ENCODE measurements at regions of chr11 and their contacts with region 1.

Region 1: DNA sequence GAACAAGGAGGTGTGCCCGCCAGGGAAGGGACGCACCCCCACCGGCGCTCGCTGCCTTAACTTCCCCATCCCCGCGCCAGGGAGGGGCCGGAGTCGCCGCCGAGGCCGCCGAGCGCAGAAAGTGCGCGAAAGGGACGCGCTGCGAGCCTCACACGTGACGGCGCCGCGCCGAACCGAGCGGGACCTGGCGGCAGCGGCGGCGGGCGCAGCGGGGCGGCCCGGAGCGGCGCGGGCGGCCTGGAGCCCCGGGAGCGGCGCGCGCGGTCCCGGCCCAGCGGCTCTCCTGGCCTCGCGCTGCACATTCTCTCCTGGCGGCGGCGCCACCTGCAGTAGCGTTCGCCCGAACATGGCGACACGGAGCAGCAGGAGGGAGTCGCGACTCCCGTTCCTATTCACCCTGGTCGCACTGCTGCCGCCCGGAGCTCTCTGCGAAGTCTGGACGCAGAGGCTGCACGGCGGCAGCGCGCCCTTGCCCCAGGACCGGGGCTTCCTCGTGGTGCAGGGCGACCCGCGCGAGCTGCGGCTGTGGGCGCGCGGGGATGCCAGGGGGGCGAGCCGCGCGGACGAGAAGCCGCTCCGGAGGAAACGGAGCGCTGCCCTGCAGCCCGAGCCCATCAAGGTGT is at the start of gene SORL1:
- DNase-seq: peak; percentile 61
- H3K4me3 Mint-ChIP-seq: peak within 1 kb of the TSS; percentile 94
- H3K27ac Mint-ChIP-seq: peak within 1 kb of the TSS; percentile 92
- H3K4me1 Mint-ChIP-seq: peaks cover 88% of the 10 kb centered on the region
- H3K27me3 Mint-ChIP-seq: no peaks in the 10 kb centered on the region
- total RNA-seq, gene SORL1: 19.2 and 20.9 TPM in 2 replicates

Region 2: GRCh38 chr11:120674542-120674941 is 777.6 kb before region 1 on chr11:
- intact Hi-C with region 1: no loop called
- DNase-seq: no peak
- H3K4me3 Mint-ChIP-seq: no peak overlapping the region
- H3K27ac Mint-ChIP-seq: no peak overlapping the region
- H3K4me1 Mint-ChIP-seq: no peaks in the 10 kb centered on the region
- H3K27me3 Mint-ChIP-seq: no peaks in the 10 kb centered on the region

Region 3: DNA sequence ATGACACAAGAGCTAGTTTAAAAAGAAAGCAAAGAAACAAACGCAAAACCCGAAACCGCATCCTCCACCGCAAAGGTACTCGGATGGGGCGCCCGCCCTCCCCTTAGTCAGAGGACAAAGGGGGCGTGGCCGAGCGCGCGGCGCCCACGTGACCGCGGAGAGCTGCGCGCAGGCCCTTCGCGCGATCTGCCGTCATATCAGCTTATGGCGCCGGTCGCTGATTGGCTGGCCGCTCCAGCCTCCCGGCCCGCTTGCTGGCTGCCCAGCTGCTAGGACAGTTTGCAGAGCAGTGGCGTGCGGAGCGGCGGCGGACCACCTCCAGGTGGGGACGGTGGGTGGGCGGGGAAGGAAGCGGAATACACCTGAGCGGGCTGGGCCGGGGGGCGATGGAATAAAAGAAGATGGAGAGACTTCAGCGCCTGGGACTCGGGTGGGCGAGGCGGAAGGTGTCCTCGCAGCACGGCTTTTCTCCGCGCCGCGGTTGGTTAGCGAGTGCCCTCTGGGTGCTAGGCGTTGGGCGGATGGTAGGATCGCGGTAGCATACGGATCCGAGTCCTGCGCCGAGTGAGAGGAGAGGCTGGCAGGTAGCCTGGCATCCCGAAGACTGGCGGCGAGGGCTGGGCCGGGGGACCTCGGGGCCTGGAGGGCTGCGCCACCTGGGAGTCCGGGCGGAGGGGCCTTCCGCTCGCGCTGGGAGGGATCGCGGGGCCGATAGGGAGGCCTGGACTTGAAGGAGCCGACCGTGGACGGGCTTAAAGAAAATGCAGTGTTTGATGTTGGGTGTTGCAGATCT is 159.4 kb before region 1 on chr11 and contains the start of gene SC5D:
- intact Hi-C with region 1: loop called (anchors 2 kb)
- DNase-seq: peak; percentile 94
- H3K4me3 Mint-ChIP-seq: peak within 1 kb of the TSS; percentile 93
- H3K27ac Mint-ChIP-seq: peak within 1 kb of the TSS; percentile 97
- H3K4me1 Mint-ChIP-seq: peaks cover 53% of the 10 kb centered on the region
- H3K27me3 Mint-ChIP-seq: peaks cover 10% of the 10 kb centered on the region
- total RNA-seq, gene SC5D: 21.9 and 26.3 TPM in 2 replicates

Region 4: GRCh38 chr11:121341609-121342008 is 110.5 kb before region 1 on chr11:
- intact Hi-C with region 1: loop called (anchors 1 kb)
- DNase-seq: no peak
- H3K4me3 Mint-ChIP-seq: no peak overlapping the region
- H3K27ac Mint-ChIP-seq: no peak overlapping the region
- H3K4me1 Mint-ChIP-seq: peaks cover 52% of the 10 kb centered on the region
- H3K27me3 Mint-ChIP-seq: peaks cover 6% of the 10 kb centered on the region

Region 5: DNA sequence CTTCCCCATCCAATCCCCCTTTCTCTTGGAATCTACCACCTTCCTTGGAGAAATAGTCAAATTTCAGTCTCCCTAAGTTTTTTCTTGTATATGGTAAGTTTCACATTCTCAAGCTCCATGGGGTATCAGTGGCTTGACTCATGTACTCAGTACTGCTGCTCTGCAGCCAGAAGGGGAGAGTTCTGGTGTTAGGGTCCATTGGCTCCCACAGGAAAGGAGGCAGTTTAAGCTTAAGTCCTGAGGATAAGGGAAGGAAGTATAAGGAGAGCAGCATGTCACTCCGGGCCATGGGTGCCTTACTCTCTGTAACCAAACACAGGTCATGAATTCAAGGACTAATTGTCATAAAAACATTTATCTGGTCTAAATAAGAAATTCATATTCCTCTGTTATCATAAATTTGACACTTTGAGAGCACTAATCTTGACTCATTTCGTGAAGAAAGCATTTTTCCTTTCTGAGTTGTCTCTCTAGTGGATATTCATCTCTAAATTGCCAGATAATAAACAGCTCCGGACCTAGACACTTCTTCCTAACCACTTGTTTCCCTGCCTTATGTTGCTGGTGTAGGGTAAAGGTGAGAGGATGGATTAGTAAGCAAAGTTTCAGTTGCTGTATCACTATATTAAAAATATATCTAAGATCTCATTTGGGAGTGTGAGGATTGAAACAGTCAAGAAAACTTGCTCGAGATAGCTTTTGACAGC is 20.1 kb before region 1 on chr11:
- intact Hi-C with region 1: loop called (anchors 1 kb)
- DNase-seq: no peak
- H3K4me3 Mint-ChIP-seq: no peak overlapping the region
- H3K27ac Mint-ChIP-seq: peak overlapping the region; percentile 36
- H3K4me1 Mint-ChIP-seq: peaks cover 27% of the 10 kb centered on the region
- H3K27me3 Mint-ChIP-seq: peaks cover 3% of the 10 kb centered on the region

Region 6: DNA sequence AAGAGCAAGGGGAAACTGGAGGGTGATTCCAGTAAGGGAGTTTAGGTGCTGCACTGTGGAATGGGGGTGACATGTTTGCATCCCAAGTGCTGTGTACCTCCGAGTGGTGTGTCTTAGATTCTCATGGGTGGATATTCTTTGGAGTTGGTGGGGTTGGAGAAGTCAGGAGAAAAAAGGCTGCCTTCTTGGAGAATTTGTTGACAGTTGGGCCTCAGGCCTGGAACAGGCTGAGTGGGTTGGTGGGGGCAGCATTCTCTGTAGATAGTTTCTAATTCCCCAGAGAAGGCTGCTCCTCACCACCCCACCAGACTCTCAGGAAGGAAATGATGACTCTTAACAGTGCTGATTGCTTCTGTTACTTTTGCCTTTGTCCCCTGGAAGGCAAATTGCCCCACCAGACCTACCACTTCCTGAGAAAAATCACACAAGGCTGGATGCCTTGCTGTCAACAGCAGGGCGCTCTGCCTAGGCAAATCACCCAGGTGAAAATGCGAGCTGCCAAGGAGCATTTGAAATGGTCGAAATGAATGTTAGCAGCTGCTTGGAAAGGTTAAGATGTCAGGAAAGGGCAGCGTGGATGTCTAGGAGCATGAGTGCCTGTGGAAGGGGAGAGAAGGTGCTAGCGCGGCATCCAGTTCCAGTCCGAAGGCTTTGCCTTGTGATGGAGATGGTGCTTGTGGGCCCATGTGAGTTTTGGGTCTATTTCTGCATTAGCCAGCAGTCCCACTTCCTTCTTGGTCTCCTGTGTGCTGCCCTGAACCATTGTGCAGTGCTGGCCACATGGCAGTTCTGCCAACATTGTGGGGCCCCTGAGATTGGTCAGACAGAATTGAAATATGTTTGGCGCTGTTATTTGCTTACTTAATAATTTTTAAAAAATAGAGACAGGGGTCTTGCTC is 30.4 kb after region 1 on chr11:
- intact Hi-C with region 1: loop called (anchors 1 kb)
- DNase-seq: peak; percentile 53
- H3K4me3 Mint-ChIP-seq: peak overlapping the region; percentile 76
- H3K27ac Mint-ChIP-seq: peak overlapping the region; percentile 96
- H3K4me1 Mint-ChIP-seq: peaks cover 36% of the 10 kb centered on the region
- H3K27me3 Mint-ChIP-seq: no peaks in the 10 kb centered on the region

Region 7: GRCh38 chr11:121534131-121535093 is 82.3 kb after region 1 on chr11:
- intact Hi-C with region 1: loop called (anchors 5 kb)
- DNase-seq: no peak
- H3K4me3 Mint-ChIP-seq: no peak overlapping the region
- H3K27ac Mint-ChIP-seq: no peak overlapping the region
- H3K4me1 Mint-ChIP-seq: peaks cover 22% of the 10 kb centered on the region
- H3K27me3 Mint-ChIP-seq: no peaks in the 10 kb centered on the region

Measured in activated T-helper 1 cell treated with anti-CD3 and anti-CD28 coated beads, Interleukin-12 subunit alpha, Interleukin-12 subunit beta, Interleukin-2, Interleukin-4 antibody, amounts not matched to agents 30 ng/mL and 10 ng/mL and 1 ng/mL, durations not matched to agents 14 hours and 24 hours and 36 hours (primary cell).